B cell (primary cell): ENCODE measurements at regions of chr1 and their contacts with region 1.

Region 1: GRCh38 chr1:110384581-110385321 is 6.1 kb downstream of the SLC16A4 start:
- DNase-seq: peak; percentile 91
- ATAC-seq: peak; percentile 77
- H3K4me3 ChIP-seq: peak overlapping the region; percentile 34 to 49 (median 42)
- H3K4me3 Mint-ChIP-seq: peak overlapping the region; percentile 78
- H3K27ac ChIP-seq: peak overlapping the region; percentile 87 to 98
- H3K27ac Mint-ChIP-seq: peak overlapping the region; percentile 90
- H3K4me1 ChIP-seq: peaks cover 61 to 79% of the 10 kb centered on the region in 2 donors
- H3K4me1 Mint-ChIP-seq: peaks cover 76% of the 10 kb centered on the region
- H3K27me3 ChIP-seq: no peaks in the 10 kb centered on the region
- H3K27me3 Mint-ChIP-seq: no peaks in the 10 kb centered on the region
- CTCF ChIP-seq: no peak

Region 2: DNA sequence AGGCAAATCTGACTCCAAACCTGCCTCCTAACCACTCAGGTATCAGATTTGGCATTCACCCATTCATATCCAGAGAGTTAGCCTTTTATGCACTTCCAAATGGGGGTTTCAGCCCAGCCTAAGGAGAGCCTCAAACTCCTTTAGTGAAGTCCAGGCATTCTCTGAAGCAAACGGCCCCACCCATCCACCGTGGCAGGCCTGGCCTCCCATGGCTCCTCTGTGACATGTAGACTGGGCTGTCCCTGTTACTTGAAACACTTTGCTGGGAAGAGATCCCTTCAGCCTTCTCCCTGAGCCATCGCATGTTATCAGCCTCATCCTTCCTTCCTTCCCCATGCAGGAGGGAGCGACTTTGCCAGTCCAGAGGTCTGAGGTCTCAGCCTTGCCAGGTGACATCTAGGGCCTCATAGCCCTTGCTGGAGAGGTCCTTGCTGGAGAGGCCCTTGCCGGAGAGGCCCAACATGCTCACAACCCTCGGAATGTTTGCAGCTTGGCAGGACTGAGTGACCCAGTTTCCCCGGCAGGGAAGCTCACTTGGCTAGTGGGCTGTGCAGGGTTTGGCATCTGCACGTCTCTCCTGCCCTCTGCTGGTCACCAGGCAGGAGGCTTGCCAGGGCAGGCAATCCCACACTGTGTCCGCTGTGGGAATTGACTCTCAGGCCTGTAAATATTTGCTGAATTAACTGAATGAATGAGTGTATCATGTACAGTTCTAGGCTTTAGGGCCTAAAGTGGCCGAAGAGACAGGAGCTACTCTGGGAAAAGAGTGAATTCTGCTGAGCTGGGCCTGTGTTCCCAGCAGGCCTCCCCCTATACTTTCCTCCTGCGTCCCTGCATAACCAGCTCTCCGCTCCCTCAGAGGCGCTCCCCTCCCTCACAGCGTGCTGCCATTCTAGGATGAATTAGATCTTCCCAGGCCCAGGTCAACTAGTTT is 72.3 kb before region 1 on chr1:
- CTCF ChIA-PET with region 1: interaction called, 16 read pairs
- POLR2A ChIA-PET with region 1: no interaction called
- intact Hi-C with region 1: no loop called
- DNase-seq: peak; percentile 81
- ATAC-seq: peak; percentile 95
- H3K4me3 ChIP-seq: no peak overlapping the region
- H3K4me3 Mint-ChIP-seq: no peak overlapping the region
- H3K27ac ChIP-seq: no peak overlapping the region
- H3K27ac Mint-ChIP-seq: no peak overlapping the region
- H3K4me1 ChIP-seq: peaks cover 0 to 4% of the 10 kb centered on the region in 2 donors
- H3K4me1 Mint-ChIP-seq: no peaks in the 10 kb centered on the region
- H3K27me3 ChIP-seq: no peaks in the 10 kb centered on the region
- H3K27me3 Mint-ChIP-seq: no peaks in the 10 kb centered on the region
- CTCF ChIP-seq: peak; percentile 89

Region 3: GRCh38 chr1:110407260-110408210 is 22.8 kb after region 1 on chr1 and contains the start of gene LAMTOR5:
- CTCF ChIA-PET with region 1: interaction called, 117 read pairs
- POLR2A ChIA-PET with region 1: interaction called, 28 read pairs
- intact Hi-C with region 1: loop called (anchors 1 kb)
- DNase-seq: peak; percentile 94
- ATAC-seq: peak; percentile 92
- H3K4me3 ChIP-seq: peak within 1 kb of the TSS; percentile 76 to 99 (median 90)
- H3K4me3 Mint-ChIP-seq: peak within 1 kb of the TSS; percentile 100
- H3K27ac ChIP-seq: peak within 1 kb of the TSS; percentile 87 to 90
- H3K27ac Mint-ChIP-seq: peak within 1 kb of the TSS; percentile 99
- H3K4me1 ChIP-seq: peaks cover 18 to 23% of the 10 kb centered on the region in 2 donors
- H3K4me1 Mint-ChIP-seq: peaks cover 25% of the 10 kb centered on the region
- H3K27me3 ChIP-seq: no peaks in the 10 kb centered on the region
- H3K27me3 Mint-ChIP-seq: no peaks in the 10 kb centered on the region
- CTCF ChIP-seq: peak; percentile 23
- total RNA-seq, gene LAMTOR5: 145 and 151 TPM in 2 replicates

Region 4: GRCh38 chr1:110482662-110483307 is 98.0 kb after region 1 on chr1:
- CTCF ChIA-PET with region 1: no interaction called
- POLR2A ChIA-PET with region 1: no interaction called
- intact Hi-C with region 1: no loop called
- DNase-seq: no peak
- ATAC-seq: no peak
- H3K4me3 ChIP-seq: no peak overlapping the region
- H3K4me3 Mint-ChIP-seq: no peak overlapping the region
- H3K27ac ChIP-seq: no peak overlapping the region
- H3K27ac Mint-ChIP-seq: no peak overlapping the region
- H3K4me1 ChIP-seq: no peaks in the 10 kb centered on the region
- H3K4me1 Mint-ChIP-seq: no peaks in the 10 kb centered on the region
- H3K27me3 ChIP-seq: peaks cover 0 to 13% (median 4%) of the 10 kb centered on the region in 4 experiments
- H3K27me3 Mint-ChIP-seq: peaks cover 38% of the 10 kb centered on the region
- CTCF ChIP-seq: no peak

Region 5: GRCh38 chr1:110872745-110873720 is 488.3 kb after region 1 on chr1 and contains the start of gene CD53:
- CTCF ChIA-PET with region 1: no interaction called
- POLR2A ChIA-PET with region 1: no interaction called
- intact Hi-C with region 1: loop called (anchors 10 kb)
- DNase-seq: peak; percentile 92
- ATAC-seq: peak; percentile 66
- H3K4me3 ChIP-seq: peak within 1 kb of the TSS; percentile 73 to 100 (median 97)
- H3K4me3 Mint-ChIP-seq: peak within 1 kb of the TSS; percentile 99
- H3K27ac ChIP-seq: peak within 1 kb of the TSS; percentile 96 to 99
- H3K27ac Mint-ChIP-seq: peak within 1 kb of the TSS; percentile 99
- H3K4me1 ChIP-seq: peaks cover 60% of the 10 kb centered on the region in 2 donors
- H3K4me1 Mint-ChIP-seq: peaks cover 70% of the 10 kb centered on the region
- H3K27me3 ChIP-seq: no peaks in the 10 kb centered on the region
- H3K27me3 Mint-ChIP-seq: no peaks in the 10 kb centered on the region
- CTCF ChIP-seq: no peak
- total RNA-seq, gene CD53: 490 and 495 TPM in 2 replicates